ENCODE measurements at regions of chr6 and their contacts with region 1.

Region 1: GRCh38 chr6:29752451-29753308 is 29.4 kb downstream of the HLA-F start:
- DNase-seq: peak; percentile 87
- H3K4me3 Mint-ChIP-seq: peak overlapping the region; percentile 91
- H3K27ac Mint-ChIP-seq: peak overlapping the region; percentile 89
- H3K4me1 Mint-ChIP-seq: peaks cover 58% of the 10 kb centered on the region
- H3K27me3 Mint-ChIP-seq: peaks cover 37% of the 10 kb centered on the region

Region 2: DNA sequence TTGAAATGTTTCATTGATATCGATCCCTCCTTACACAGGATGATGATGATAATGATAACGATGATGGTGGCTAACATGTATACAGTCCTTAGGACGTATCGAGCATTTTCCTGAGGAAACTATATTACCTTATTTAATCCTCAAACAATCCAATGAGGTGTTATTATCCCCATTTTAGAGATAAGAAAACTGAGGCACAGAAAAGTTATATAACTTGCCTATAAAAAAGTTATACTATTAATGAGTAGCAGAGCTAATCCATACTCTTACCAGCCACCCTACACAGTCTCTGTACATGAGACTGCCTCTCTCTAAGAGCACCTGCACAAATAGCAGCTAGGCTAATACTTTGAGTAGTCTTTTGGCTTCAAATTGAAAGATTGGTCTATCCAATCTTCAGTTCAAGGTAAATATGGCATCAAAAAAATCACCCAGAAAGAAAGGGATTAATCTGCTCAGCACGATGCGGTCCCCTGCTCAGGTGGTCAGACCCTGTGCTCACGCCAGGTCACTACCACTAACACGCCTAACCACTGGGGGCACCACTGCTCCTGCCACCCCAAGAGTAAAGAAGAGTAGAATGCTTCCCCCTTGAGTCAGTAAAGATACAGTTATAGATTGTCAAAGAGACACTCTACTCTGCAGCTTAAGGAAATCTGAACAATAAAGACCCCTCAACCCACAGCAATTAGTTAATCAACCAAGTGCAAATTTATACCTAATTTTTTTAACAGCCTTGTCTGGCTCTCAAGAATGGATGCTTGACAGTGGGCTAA is 134.7 kb before region 1 on chr6:
- CTCF ChIA-PET with region 1: no interaction called
- DNase-seq: no peak
- H3K4me3 Mint-ChIP-seq: no peak overlapping the region
- H3K27ac Mint-ChIP-seq: no peak overlapping the region
- H3K4me1 Mint-ChIP-seq: no peaks in the 10 kb centered on the region
- H3K27me3 Mint-ChIP-seq: no peaks in the 10 kb centered on the region

Region 3: DNA sequence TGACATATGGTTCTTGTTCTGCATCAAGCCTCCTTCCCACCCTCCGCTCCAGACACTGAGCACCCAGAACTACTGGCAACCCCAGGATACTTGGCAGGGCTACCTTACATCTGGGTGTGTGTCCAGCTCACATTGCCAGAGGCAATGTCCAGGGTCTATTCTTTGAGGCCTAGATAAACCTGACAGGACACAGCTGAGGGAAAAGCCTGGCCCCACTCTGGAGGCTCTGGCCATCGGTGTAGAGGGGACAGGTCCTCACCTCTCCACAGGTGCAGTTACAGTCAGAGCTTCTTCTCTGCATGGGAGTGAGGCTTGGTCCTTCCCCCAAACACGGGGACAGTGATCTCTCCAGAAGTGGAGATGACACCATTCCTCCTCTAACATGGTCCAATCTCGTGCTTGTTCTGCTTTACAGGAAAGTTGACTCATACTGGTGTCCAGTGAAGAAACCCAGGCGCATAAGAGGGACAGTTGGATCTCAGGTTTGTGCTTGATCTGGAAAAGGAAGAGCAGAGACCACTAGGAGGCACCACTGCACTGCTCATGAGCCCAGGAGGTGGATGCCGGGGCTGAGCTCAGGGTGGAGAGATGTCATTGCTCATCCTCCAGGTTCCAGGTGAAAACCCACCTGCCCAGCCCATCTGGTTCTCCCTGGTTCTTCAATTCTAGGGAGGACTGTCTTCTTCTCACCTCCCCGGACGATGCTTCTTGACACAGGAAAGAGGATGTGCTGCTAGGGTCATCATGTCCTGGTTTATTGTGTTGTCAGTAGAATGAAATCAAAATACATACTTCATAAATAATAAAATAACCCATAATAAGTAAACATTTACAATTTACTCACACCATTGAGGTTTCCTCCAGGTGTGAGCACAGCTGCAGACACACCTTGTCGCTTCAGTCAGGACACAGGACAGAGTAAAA is 14.7 kb before region 1 on chr6:
- CTCF ChIA-PET with region 1: interaction called, 34 read pairs
- DNase-seq: peak; percentile 85
- H3K4me3 Mint-ChIP-seq: no peak overlapping the region
- H3K27ac Mint-ChIP-seq: no peak overlapping the region
- H3K4me1 Mint-ChIP-seq: peaks cover 11% of the 10 kb centered on the region
- H3K27me3 Mint-ChIP-seq: no peaks in the 10 kb centered on the region